ENCODE measurements at regions of chr10 and their contacts with region 1.

Region 1: GRCh38 chr10:32017021-32017420 is 39.2 kb downstream of the KIF5B start:
- DNase-seq: no peak
- ATAC-seq: no peak
- H3K4me3 ChIP-seq: no peak overlapping the region
- H3K4me3 Mint-ChIP-seq: no peak overlapping the region
- H3K27ac ChIP-seq: no peak overlapping the region
- H3K27ac Mint-ChIP-seq: no peak overlapping the region
- H3K4me1 ChIP-seq: no peaks in the 10 kb centered on the region
- H3K4me1 Mint-ChIP-seq: no peaks in the 10 kb centered on the region
- H3K27me3 ChIP-seq: no peaks in the 10 kb centered on the region
- H3K27me3 Mint-ChIP-seq: no peaks in the 10 kb centered on the region
- CTCF ChIP-seq: no peak

Region 2: DNA sequence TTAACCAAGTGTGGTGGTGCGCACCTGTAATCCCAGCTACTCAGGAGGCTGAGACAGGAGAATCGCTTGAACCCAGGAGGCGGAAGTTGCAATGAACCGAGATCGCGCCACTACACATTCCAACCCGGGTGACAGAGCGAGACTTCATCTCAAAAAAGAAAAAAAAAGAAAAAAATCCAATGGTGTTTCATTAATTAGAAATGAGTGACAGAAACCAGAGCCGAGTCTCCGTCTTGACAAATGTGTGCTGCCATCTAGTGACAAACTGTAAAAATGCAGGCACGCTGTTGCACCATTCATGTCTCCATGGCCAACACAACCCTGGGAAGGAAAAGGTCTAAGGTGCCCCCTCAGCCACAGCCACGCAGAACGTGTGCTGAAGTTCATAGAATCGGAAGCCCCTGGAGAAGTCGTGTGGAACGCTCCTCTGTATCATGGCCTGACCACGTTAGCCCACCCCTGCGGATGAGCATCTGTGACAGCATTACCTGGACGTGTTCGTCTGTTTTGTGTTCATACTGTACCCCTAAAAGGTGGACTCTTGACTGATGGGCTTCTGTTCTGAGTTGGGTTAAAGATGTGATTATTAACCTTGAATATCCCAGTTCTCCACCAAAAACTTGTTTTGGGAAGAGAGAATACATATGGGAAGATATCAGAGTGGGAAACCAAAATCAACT is 1482.4 kb before region 1 on chr10:
- CTCF ChIA-PET with region 1: no interaction called
- POLR2A ChIA-PET with region 1: no interaction called
- intact Hi-C with region 1: no loop called
- DNase-seq: peak; percentile 41 to 88 (median 72)
- ATAC-seq: peak; percentile 43
- H3K4me3 ChIP-seq: no peak overlapping the region
- H3K4me3 Mint-ChIP-seq: no peak overlapping the region
- H3K27ac ChIP-seq: no peak overlapping the region
- H3K27ac Mint-ChIP-seq: no peak overlapping the region
- H3K4me1 ChIP-seq: peaks cover 7% of the 10 kb centered on the region
- H3K4me1 Mint-ChIP-seq: peaks cover 29% of the 10 kb centered on the region
- H3K27me3 ChIP-seq: no peaks in the 10 kb centered on the region
- H3K27me3 Mint-ChIP-seq: no peaks in the 10 kb centered on the region
- CTCF ChIP-seq: peak; percentile 92

Region 3: DNA sequence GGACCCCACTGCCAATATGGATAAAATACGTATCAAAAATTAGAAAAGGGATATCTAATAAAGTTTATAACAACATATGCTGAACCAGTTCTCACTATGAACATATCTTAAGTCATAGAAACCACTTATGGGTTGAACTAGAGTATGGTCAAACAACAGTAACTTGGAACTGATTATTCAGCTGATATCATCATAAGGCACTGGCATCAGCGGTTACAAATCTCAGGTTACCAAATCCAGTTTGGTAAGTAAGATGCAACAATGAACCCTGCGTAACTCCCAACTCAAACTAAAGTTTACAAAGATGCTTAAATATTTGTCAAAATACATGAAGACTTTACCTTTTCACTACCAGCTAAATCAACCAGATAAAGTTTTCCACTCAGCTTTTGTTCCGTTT is 19.9 kb after region 1 on chr10:
- CTCF ChIA-PET with region 1: interaction called, 3 read pairs
- POLR2A ChIA-PET with region 1: no interaction called
- intact Hi-C with region 1: loop called in 1 of 2 experiments (anchors 2 kb)
- DNase-seq: no peak
- ATAC-seq: no peak
- H3K4me3 ChIP-seq: no peak overlapping the region
- H3K4me3 Mint-ChIP-seq: no peak overlapping the region
- H3K27ac ChIP-seq: no peak overlapping the region
- H3K27ac Mint-ChIP-seq: no peak overlapping the region
- H3K4me1 ChIP-seq: no peaks in the 10 kb centered on the region
- H3K4me1 Mint-ChIP-seq: peaks cover 21% of the 10 kb centered on the region
- H3K27me3 ChIP-seq: no peaks in the 10 kb centered on the region
- H3K27me3 Mint-ChIP-seq: no peaks in the 10 kb centered on the region
- CTCF ChIP-seq: no peak

Region 4: DNA sequence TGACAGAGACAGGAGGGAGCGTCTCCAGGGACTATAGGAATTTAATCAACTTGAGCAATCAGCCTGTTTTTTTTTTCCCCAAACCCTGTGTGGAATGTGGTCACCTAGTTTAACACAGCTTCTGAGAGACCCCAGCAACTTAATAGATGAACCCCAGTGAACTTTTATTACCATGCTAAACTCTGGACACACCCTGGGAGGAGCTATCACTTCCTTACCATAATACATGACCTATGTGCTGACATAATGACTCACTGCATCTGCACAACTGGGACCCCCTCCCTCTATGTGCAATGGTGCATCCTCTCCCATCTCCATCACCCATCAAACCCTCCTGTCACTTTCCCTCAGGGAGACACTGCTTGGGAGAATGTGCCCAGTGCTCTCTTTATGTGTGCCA is 246.3 kb after region 1 on chr10:
- CTCF ChIA-PET with region 1: no interaction called
- POLR2A ChIA-PET with region 1: no interaction called
- intact Hi-C with region 1: loop called in 1 of 2 experiments (anchors 10 kb)
- DNase-seq: no peak
- ATAC-seq: peak; percentile 42
- H3K4me3 ChIP-seq: no peak overlapping the region
- H3K4me3 Mint-ChIP-seq: no peak overlapping the region
- H3K27ac ChIP-seq: no peak overlapping the region
- H3K27ac Mint-ChIP-seq: no peak overlapping the region
- H3K4me1 ChIP-seq: no peaks in the 10 kb centered on the region
- H3K4me1 Mint-ChIP-seq: no peaks in the 10 kb centered on the region
- H3K27me3 ChIP-seq: no peaks in the 10 kb centered on the region
- H3K27me3 Mint-ChIP-seq: no peaks in the 10 kb centered on the region
- CTCF ChIP-seq: no peak